ENCODE measurements at regions of chr17 and their contacts with region 1.

Region 1: GRCh38 chr17:37818689-37819088 is 73.8 kb upstream of the HNF1B start:
- DNase-seq: no peak
- H3K4me3 ChIP-seq: no peak overlapping the region
- H3K4me3 Mint-ChIP-seq: no peak overlapping the region
- H3K27ac Mint-ChIP-seq: no peak overlapping the region
- H3K4me1 ChIP-seq: peaks cover 7% of the 10 kb centered on the region; the same call in 1 of the 2 replicates
- H3K4me1 Mint-ChIP-seq: no peaks in the 10 kb centered on the region
- H3K27me3 ChIP-seq: no peaks in the 10 kb centered on the region
- H3K27me3 Mint-ChIP-seq: no peaks in the 10 kb centered on the region
- CTCF ChIP-seq: no peak

Region 2: GRCh38 chr17:37527249-37527851 is 291.3 kb before region 1 on chr17:
- CTCF ChIA-PET with region 1: interaction called, 8 read pairs
- POLR2A ChIA-PET with region 1: no interaction called
- intact Hi-C with region 1: loop called (anchors 2 kb)
- DNase-seq: peak; percentile 52 to 70
- H3K4me3 ChIP-seq: no peak overlapping the region
- H3K4me3 Mint-ChIP-seq: no peak overlapping the region
- H3K27ac Mint-ChIP-seq: no peak overlapping the region
- H3K4me1 ChIP-seq: no peaks in the 10 kb centered on the region
- H3K4me1 Mint-ChIP-seq: no peaks in the 10 kb centered on the region
- H3K27me3 ChIP-seq: no peaks in the 10 kb centered on the region
- H3K27me3 Mint-ChIP-seq: no peaks in the 10 kb centered on the region
- CTCF ChIP-seq: peak; percentile 81 to 87

Region 3: GRCh38 chr17:37650419-37651003 is 168.2 kb before region 1 on chr17:
- CTCF ChIA-PET with region 1: interaction called, 13 read pairs
- POLR2A ChIA-PET with region 1: no interaction called
- intact Hi-C with region 1: loop called (anchors 1 kb)
- DNase-seq: peak; percentile 64 to 66
- H3K4me3 ChIP-seq: no peak overlapping the region
- H3K4me3 Mint-ChIP-seq: no peak overlapping the region
- H3K27ac Mint-ChIP-seq: no peak overlapping the region
- H3K4me1 ChIP-seq: peaks cover 13% of the 10 kb centered on the region
- H3K4me1 Mint-ChIP-seq: peaks cover 14% of the 10 kb centered on the region
- H3K27me3 ChIP-seq: no peaks in the 10 kb centered on the region
- H3K27me3 Mint-ChIP-seq: no peaks in the 10 kb centered on the region
- CTCF ChIP-seq: peak; percentile 70 to 71

Region 4: DNA sequence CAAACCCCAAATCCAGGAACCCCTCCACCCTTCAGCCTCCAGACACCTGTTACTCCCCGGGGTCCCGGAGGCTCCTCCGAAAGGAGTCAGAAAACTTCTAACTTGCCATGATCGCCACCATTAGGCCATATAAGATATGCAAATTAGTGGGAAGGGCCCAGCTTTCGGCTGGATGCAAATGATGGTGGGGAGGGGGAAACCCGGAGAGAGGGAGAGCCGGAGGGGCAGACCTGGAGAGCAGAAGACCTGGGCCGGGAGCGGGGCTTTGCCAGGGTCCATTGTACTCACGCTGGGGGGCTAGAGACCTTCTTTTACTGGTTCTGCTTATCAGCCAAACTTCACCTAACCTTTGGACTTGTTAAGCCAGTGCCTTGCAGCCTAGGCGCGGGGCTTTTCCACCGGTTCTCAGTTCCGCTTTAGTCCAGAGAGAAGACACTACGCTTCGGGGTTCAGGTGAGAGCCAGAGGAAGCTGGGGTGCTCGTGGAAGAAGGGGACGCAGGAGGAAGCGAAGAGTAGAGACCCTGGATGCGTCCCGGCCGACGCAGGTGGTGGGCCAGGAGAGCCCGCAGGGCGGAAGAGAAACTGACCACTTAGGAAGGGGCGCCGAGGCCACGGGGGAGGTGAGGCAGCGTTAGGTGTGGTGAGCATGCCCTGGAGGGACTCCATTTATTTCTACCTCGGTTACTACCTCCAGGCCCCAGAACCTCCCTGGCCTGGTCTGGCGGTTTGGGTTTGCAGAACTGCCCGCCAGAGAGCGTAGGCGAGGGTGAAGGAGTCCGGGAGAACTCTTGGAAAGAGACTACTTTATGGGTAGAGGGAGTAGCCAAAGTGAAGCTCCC is 73.5 kb before region 1 on chr17 and contains the start of gene HNF1B:
- CTCF ChIA-PET with region 1: interaction called, 29 read pairs
- POLR2A ChIA-PET with region 1: interaction called, 3 read pairs
- intact Hi-C with region 1: loop called (anchors 1 kb)
- DNase-seq: peak; percentile 87 to 88
- H3K4me3 ChIP-seq: peak within 1 kb of the TSS; percentile 64
- H3K4me3 Mint-ChIP-seq: peak within 1 kb of the TSS; percentile 100
- H3K27ac Mint-ChIP-seq: peak within 1 kb of the TSS; percentile 100
- H3K4me1 ChIP-seq: peaks cover 21% of the 10 kb centered on the region
- H3K4me1 Mint-ChIP-seq: peaks cover 23% of the 10 kb centered on the region
- H3K27me3 ChIP-seq: no peaks in the 10 kb centered on the region
- H3K27me3 Mint-ChIP-seq: no peaks in the 10 kb centered on the region
- CTCF ChIP-seq: peak in 1 of 2 experiments; percentile 17
- total RNA-seq, gene HNF1B: 36.9 TPM in 2 replicates

Region 5: DNA sequence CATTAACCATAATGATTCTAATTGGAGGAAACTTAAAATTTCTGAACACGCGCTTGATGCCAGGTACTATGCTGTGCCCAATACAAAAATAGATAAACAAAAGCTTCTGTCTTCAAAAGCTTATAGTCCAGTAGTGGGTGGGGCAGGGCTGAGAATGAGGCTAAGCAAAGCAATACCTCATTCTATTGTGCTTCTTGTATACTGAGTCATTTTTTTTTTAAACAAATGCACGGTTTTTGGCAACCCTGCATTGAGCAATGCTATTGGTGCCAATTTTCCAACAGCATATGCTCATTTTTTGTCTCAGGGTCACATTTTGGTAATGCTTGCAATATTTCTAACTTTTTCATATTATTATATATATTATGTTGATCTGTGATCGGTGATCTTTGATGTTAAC is 39.1 kb before region 1 on chr17:
- CTCF ChIA-PET with region 1: interaction called, 12 read pairs
- POLR2A ChIA-PET with region 1: no interaction called
- intact Hi-C with region 1: no loop called
- DNase-seq: no peak
- H3K4me3 ChIP-seq: no peak overlapping the region
- H3K4me3 Mint-ChIP-seq: no peak overlapping the region
- H3K27ac Mint-ChIP-seq: no peak overlapping the region
- H3K4me1 ChIP-seq: no peaks in the 10 kb centered on the region
- H3K4me1 Mint-ChIP-seq: no peaks in the 10 kb centered on the region
- H3K27me3 ChIP-seq: no peaks in the 10 kb centered on the region
- H3K27me3 Mint-ChIP-seq: peaks cover 3% of the 10 kb centered on the region
- CTCF ChIP-seq: no peak